ENCODE measurements at regions of chr15 and their contacts with region 1.

Region 1: DNA sequence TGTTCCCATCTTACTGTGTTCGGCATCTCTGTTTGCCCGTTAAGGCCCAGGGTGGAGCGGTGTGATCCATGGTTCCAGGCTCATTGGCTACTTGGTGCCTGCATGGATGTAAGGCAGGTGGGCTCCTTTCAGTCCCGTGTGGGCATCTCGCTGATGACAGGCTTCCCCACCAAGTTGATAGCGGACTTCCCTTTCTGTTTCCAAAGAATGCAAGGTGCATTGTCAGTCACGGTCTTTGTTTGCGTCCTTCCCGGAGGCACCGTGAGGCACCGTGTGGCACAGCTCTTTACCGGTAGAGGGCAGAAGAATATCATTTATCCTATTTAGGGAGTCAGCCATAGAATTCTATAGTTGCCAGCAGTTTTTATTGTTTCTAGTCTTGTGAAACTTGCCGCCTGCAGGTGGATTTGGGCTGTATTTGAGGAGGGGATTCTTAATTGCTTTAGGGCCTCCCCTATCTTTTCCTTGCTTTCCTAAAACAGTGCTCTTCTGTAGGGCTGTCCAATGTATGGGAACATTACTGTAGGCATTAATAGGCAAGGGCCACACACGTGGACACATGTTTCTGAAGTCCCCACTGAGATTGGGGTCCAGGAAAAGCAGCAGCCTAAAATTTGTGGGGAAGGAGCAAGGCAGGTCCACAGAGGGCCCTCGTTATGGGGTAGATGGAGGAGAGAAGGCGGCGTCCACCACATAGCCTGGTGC is 244.1 kb downstream of the SLCO3A1 start:
- DNase-seq: peak in 2 of 3 donors; percentile 54 to 71
- ATAC-seq: peak; percentile 86
- H3K4me3 ChIP-seq: no peak overlapping the region
- H3K4me1 ChIP-seq: peaks cover 4% of the 10 kb centered on the region
- CTCF ChIP-seq: peak; percentile 55

Region 2: GRCh38 chr15:92226014-92226612 is 128.5 kb after region 1 on chr15:
- intact Hi-C with region 1: loop called in 1 of 2 experiments (anchors 5 kb)
- DNase-seq: peak in 1 of 3 donors; percentile 18
- ATAC-seq: peak; percentile 61
- H3K4me3 ChIP-seq: no peak overlapping the region
- H3K4me1 ChIP-seq: no peaks in the 10 kb centered on the region
- CTCF ChIP-seq: peak; percentile 25

Measured in mucosa of descending colon (tissue), 3 donors.